Calu3 (cell line): ENCODE measurements at regions of chrX and their contacts with region 1.

Region 1: GRCh38 chrX:18390941-18391538 is 34.4 kb upstream of the CDKL5 start:
- DNase-seq: peak; percentile 45
- H3K4me3 Mint-ChIP-seq: no peak overlapping the region
- H3K27ac Mint-ChIP-seq: no peak overlapping the region
- H3K4me1 Mint-ChIP-seq: peaks cover 10% of the 10 kb centered on the region
- H3K27me3 Mint-ChIP-seq: no peaks in the 10 kb centered on the region
- CTCF ChIP-seq: peak; percentile 15

Region 2: GRCh38 chrX:18899796-18900447 is 508.9 kb after region 1 on chrX:
- CTCF ChIA-PET with region 1: no interaction called
- intact Hi-C with region 1: loop called (anchors 5 kb)
- DNase-seq: no peak
- H3K4me3 Mint-ChIP-seq: no peak overlapping the region
- H3K27ac Mint-ChIP-seq: no peak overlapping the region
- H3K4me1 Mint-ChIP-seq: no peaks in the 10 kb centered on the region
- H3K27me3 Mint-ChIP-seq: no peaks in the 10 kb centered on the region
- CTCF ChIP-seq: no peak

Region 3: GRCh38 chrX:18984381-18985185 is 593.5 kb after region 1 on chrX:
- CTCF ChIA-PET with region 1: no interaction called
- intact Hi-C with region 1: loop called (anchors 10 kb)
- DNase-seq: peak; percentile 85
- H3K4me3 Mint-ChIP-seq: peak overlapping the region; percentile 76
- H3K27ac Mint-ChIP-seq: peak overlapping the region; percentile 66
- H3K4me1 Mint-ChIP-seq: peaks cover 19% of the 10 kb centered on the region
- H3K27me3 Mint-ChIP-seq: no peaks in the 10 kb centered on the region
- CTCF ChIP-seq: peak; percentile 74